ENCODE measurements at regions of chr12 and their contacts with region 1.

Region 1: DNA sequence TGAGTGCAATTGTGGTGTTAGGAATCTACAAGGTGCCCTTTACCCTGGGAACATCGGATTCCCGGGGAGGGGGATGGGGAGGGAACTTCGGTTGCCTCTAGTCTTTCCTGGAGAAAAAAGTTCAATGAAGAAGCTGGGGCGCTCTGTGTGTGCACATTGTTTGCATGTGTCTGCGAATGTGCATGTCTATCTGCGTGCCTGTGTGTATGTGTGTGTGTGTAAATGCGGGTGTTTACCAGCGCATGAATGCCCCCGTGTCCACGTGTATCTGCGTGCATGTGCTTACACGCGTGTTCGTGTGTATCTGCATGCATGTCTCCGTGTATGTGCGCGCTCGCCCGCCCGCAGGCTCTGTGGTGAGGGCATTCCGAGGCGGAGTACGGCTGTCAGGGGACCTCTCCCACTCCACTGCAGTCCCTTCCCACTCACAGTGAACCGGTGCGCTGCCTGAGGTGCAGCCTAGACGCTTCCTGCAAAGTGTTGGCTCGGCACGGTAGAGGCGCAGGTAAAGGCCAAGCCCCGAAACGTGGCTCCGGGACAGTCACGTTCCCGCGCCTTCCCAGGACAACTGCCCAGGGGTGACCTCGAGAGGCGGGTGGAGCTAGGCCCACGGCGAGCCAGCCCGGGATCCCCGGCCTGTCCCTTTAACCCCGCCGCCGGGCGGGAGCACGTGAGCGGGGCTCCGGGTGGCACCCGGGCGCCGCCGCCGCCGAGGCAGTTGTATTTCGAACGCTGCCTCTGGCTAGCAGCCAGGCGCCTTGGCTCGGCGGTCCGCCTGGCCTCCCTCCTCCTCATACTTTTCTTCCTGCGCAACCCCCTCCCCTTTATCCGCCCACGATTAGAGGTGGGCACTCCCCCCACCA is 539 bp upstream of the HMGA2 start:
- DNase-seq: peak; percentile 85
- H3K4me3 Mint-ChIP-seq: peak overlapping the region; percentile 94
- H3K27ac Mint-ChIP-seq: peak overlapping the region; percentile 90
- H3K4me1 Mint-ChIP-seq: peaks cover 35% of the 10 kb centered on the region
- H3K27me3 Mint-ChIP-seq: no peaks in the 10 kb centered on the region
- CTCF ChIP-seq: no peak

Region 2: GRCh38 chr12:65306366-65307168 is 517.2 kb before region 1 on chr12:
- CTCF ChIA-PET with region 1: no interaction called
- POLR2A ChIA-PET with region 1: interaction called, 3 read pairs
- intact Hi-C with region 1: loop called (anchors 2 kb)
- DNase-seq: peak; percentile 73
- H3K4me3 Mint-ChIP-seq: peak overlapping the region; percentile 29
- H3K27ac Mint-ChIP-seq: peak overlapping the region; percentile 59
- H3K4me1 Mint-ChIP-seq: peaks cover 26% of the 10 kb centered on the region
- H3K27me3 Mint-ChIP-seq: no peaks in the 10 kb centered on the region
- CTCF ChIP-seq: peak; percentile 75

Region 3: GRCh38 chr12:65840793-65841670 is 17.3 kb after region 1 on chr12:
- CTCF ChIA-PET with region 1: interaction called, 5 read pairs
- POLR2A ChIA-PET with region 1: interaction called, 87 read pairs
- intact Hi-C with region 1: no loop called
- DNase-seq: no peak
- H3K4me3 Mint-ChIP-seq: no peak overlapping the region
- H3K27ac Mint-ChIP-seq: peak overlapping the region; percentile 41
- H3K4me1 Mint-ChIP-seq: peaks cover 37% of the 10 kb centered on the region
- H3K27me3 Mint-ChIP-seq: no peaks in the 10 kb centered on the region
- CTCF ChIP-seq: peak; percentile 19

Region 4: GRCh38 chr12:65881965-65882413 is 58.2 kb after region 1 on chr12:
- CTCF ChIA-PET with region 1: interaction called, 6 read pairs
- POLR2A ChIA-PET with region 1: interaction called, 7 read pairs
- intact Hi-C with region 1: loop called (anchors 2 kb)
- DNase-seq: no peak
- H3K4me3 Mint-ChIP-seq: no peak overlapping the region
- H3K27ac Mint-ChIP-seq: peak overlapping the region; percentile 80
- H3K4me1 Mint-ChIP-seq: peaks cover 55% of the 10 kb centered on the region
- H3K27me3 Mint-ChIP-seq: no peaks in the 10 kb centered on the region
- CTCF ChIP-seq: no peak

Region 5: DNA sequence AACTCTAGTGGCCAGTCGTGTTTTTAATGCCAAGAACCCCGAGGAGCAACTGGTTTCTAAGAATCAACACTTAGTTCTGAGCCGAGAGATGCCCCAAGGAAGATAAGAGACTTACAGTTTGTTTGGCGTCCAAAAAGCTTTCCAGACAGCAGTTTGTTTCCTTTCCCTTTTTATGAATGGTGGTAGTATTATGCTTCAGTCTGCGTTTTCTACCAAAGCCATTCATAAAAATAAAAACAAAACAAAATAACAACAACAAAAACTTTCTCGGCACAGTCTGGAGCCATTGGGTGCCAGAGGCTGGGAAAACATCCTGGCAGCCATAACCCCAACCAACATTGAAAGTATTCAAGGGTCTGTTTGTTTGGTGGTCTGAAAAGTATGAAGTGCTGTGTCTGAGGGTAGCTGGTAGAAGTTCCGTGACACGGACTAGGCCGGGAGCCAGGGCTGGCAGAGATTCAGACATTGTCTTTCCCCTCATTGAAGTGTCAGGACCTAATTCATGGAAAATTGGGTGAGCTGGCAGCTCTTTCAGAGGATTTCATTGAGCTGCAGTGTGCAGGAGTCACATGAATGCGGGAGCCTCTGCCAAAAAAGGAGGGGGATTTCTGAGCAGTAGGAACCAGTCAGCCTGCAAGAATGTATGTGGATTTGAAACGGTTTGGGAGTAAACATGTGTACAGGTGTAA is 124.7 kb after region 1 on chr12:
- CTCF ChIA-PET with region 1: no interaction called
- POLR2A ChIA-PET with region 1: interaction called, 9 read pairs
- intact Hi-C with region 1: loop called (anchors 2 kb)
- DNase-seq: peak; percentile 98
- H3K4me3 Mint-ChIP-seq: peak overlapping the region; percentile 68
- H3K27ac Mint-ChIP-seq: peak overlapping the region; percentile 96
- H3K4me1 Mint-ChIP-seq: peaks cover 63% of the 10 kb centered on the region
- H3K27me3 Mint-ChIP-seq: no peaks in the 10 kb centered on the region
- CTCF ChIP-seq: no peak

Region 6: DNA sequence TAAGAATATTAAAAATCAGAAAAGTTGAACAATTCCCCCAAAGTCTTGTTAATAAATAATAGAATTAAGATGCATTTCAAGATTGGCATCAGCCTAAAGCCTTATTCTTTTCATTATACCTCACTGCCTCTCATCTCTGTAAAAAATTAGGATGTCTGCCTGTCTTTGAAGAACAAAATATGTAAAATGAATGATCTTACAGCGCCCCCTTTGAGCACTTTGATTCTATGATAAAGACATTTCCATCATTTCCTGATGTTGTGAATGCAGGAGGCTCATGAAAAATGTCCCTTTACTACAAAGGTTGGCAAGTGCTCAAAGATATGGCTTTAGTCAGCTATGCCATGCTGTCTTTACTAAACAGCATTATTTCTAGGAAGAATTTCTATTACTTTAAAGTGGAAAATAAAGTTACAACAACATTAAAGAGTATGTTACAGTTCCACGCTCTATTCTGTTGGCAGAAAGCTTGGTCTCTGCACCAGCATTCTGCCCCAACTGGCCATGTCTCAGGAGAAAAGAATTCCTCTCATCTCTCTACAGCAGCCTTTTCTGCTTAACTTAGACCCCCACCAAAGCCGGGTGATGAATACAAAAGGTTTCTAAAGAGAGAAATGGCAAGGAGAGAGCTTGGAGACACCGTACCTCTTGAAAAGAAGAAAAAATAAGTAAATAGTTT is 211.7 kb after region 1 on chr12:
- CTCF ChIA-PET with region 1: no interaction called
- POLR2A ChIA-PET with region 1: no interaction called
- intact Hi-C with region 1: loop called (anchors 2 kb)
- DNase-seq: peak; percentile 68
- H3K4me3 Mint-ChIP-seq: no peak overlapping the region
- H3K27ac Mint-ChIP-seq: no peak overlapping the region
- H3K4me1 Mint-ChIP-seq: peaks cover 23% of the 10 kb centered on the region
- H3K27me3 Mint-ChIP-seq: no peaks in the 10 kb centered on the region
- CTCF ChIP-seq: peak; percentile 51

Measured in MCF 10A (cell line).